ENCODE measurements at regions of chr7 and their contacts with region 1.

Region 1: GRCh38 chr7:128387216-128388144 is 22.3 kb downstream of the IMPDH1 start:
- DNase-seq: peak; percentile 49 to 72
- H3K4me3 ChIP-seq: no peak overlapping the region
- H3K27ac ChIP-seq: no peak overlapping the region
- H3K4me1 ChIP-seq: peaks cover 29% of the 10 kb centered on the region
- H3K27me3 ChIP-seq: no peaks in the 10 kb centered on the region
- CTCF ChIP-seq: peak; percentile 85

Region 2: GRCh38 chr7:128347647-128348097 is 39.8 kb before region 1 on chr7:
- CTCF ChIA-PET with region 1: interaction called, 56 read pairs
- POLR2A ChIA-PET with region 1: no interaction called
- intact Hi-C with region 1: loop called (anchors 1 kb)
- DNase-seq: peak; percentile 52 to 62
- H3K4me3 ChIP-seq: no peak overlapping the region
- H3K27ac ChIP-seq: no peak overlapping the region
- H3K4me1 ChIP-seq: peaks cover 13% of the 10 kb centered on the region
- H3K27me3 ChIP-seq: no peaks in the 10 kb centered on the region
- CTCF ChIP-seq: peak; percentile 88

Region 3: GRCh38 chr7:128362670-128363069 is 24.8 kb before region 1 on chr7:
- CTCF ChIA-PET with region 1: interaction called, 4 read pairs
- POLR2A ChIA-PET with region 1: interaction called, 10 read pairs
- intact Hi-C with region 1: no loop called
- DNase-seq: no peak
- H3K4me3 ChIP-seq: no peak overlapping the region
- H3K27ac ChIP-seq: no peak overlapping the region
- H3K4me1 ChIP-seq: peaks cover 17% of the 10 kb centered on the region
- H3K27me3 ChIP-seq: peaks cover 10% of the 10 kb centered on the region; the same call in 1 of the 2 replicates
- CTCF ChIP-seq: no peak

Region 4: GRCh38 chr7:128409596-128410160 is 22.2 kb after region 1 on chr7 and contains the start of gene IMPDH1:
- CTCF ChIA-PET with region 1: interaction called, 15 read pairs
- POLR2A ChIA-PET with region 1: interaction called, 9 read pairs
- intact Hi-C with region 1: no loop called
- DNase-seq: peak; percentile 52 to 95
- H3K4me3 ChIP-seq: peak within 1 kb of the TSS; percentile 67
- H3K27ac ChIP-seq: peak within 1 kb of the TSS; percentile 66
- H3K4me1 ChIP-seq: peaks cover 25% of the 10 kb centered on the region
- H3K27me3 ChIP-seq: no peaks in the 10 kb centered on the region
- CTCF ChIP-seq: no peak
- total RNA-seq, gene IMPDH1: 119 and 123 TPM in 2 replicates

Measured in PC-9 (cell line).